ENCODE measurements at regions of chr22 and their contacts with region 1.

Region 1: GRCh38 chr22:37608477-37609239 is at the start of gene GGA1:
- DNase-seq: peak; percentile 90 to 100 (median 94)
- ATAC-seq: peak; percentile 77
- H3K4me3 ChIP-seq: peak within 1 kb of the TSS; percentile 92
- H3K4me3 Mint-ChIP-seq: peak within 1 kb of the TSS; percentile 94
- H3K27ac ChIP-seq: peak within 1 kb of the TSS; percentile 88 to 98
- H3K27ac Mint-ChIP-seq: peak within 1 kb of the TSS; percentile 92
- H3K4me1 ChIP-seq: peaks cover 75% of the 10 kb centered on the region
- H3K4me1 Mint-ChIP-seq: peaks cover 55% of the 10 kb centered on the region
- H3K27me3 ChIP-seq: no peaks in the 10 kb centered on the region
- H3K27me3 Mint-ChIP-seq: no peaks in the 10 kb centered on the region
- CTCF ChIP-seq: no peak
- total RNA-seq, gene GGA1: 57.0 to 60.9 TPM

Region 2: DNA sequence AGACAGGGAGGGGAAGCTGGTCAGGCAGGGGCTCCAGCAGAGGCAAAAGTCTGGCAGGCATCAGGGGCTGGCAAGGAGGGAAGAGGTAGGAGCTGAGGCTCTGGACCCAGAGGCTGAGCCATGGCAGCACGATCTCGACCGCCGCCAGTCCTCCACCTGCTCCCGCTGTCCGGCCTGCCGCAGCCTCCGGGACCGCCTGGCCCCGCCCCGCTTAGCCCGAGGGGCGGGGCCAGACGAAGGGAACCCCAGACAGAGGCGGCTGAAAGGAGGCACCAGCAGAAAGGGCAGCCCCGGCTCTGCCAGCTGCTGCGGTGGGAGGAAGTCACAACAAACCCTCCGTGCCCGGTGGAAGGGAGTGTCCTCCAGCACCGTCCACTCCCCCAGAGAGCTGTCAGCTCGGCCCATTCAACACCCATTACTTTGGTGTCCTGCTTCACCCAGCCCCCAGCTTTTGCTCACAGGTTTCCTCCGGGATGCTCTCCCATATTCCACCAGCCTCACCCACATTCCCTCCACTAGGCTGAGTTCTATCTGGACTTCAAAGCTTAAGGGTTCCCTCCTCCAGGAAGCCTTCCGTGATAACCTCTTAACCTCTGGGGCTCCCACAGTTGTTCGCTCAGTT is 122.3 kb before region 1 on chr22 and contains the start of gene MFNG:
- CTCF ChIA-PET with region 1: interaction called, 4 read pairs
- POLR2A ChIA-PET with region 1: interaction called, 78 read pairs
- intact Hi-C with region 1: loop called (anchors 1 kb)
- DNase-seq: peak; percentile 46 to 90 (median 72)
- ATAC-seq: peak; percentile 48
- H3K4me3 ChIP-seq: peak within 1 kb of the TSS; percentile 94
- H3K4me3 Mint-ChIP-seq: peak within 1 kb of the TSS; percentile 93
- H3K27ac ChIP-seq: peak within 1 kb of the TSS; percentile 87 to 88
- H3K27ac Mint-ChIP-seq: peak within 1 kb of the TSS; percentile 98
- H3K4me1 ChIP-seq: peaks cover 85% of the 10 kb centered on the region
- H3K4me1 Mint-ChIP-seq: peaks cover 77% of the 10 kb centered on the region
- H3K27me3 ChIP-seq: no peaks in the 10 kb centered on the region
- H3K27me3 Mint-ChIP-seq: no peaks in the 10 kb centered on the region
- CTCF ChIP-seq: no peak
- total RNA-seq, gene MFNG: 85.1 to 89.9 TPM

Region 3: GRCh38 chr22:37498289-37498909 is 110.3 kb before region 1 on chr22:
- CTCF ChIA-PET with region 1: no interaction called
- POLR2A ChIA-PET with region 1: no interaction called
- intact Hi-C with region 1: no loop called
- DNase-seq: peak; percentile 56 to 88 (median 72)
- ATAC-seq: peak; percentile 99
- H3K4me3 ChIP-seq: no peak overlapping the region
- H3K4me3 Mint-ChIP-seq: no peak overlapping the region
- H3K27ac ChIP-seq: no peak overlapping the region
- H3K27ac Mint-ChIP-seq: no peak overlapping the region
- H3K4me1 ChIP-seq: peaks cover 30% of the 10 kb centered on the region
- H3K4me1 Mint-ChIP-seq: peaks cover 28% of the 10 kb centered on the region
- H3K27me3 ChIP-seq: no peaks in the 10 kb centered on the region
- H3K27me3 Mint-ChIP-seq: no peaks in the 10 kb centered on the region
- CTCF ChIP-seq: peak; percentile 76

Region 4: GRCh38 chr22:37557321-37558001 is 51.2 kb before region 1 on chr22:
- CTCF ChIA-PET with region 1: no interaction called
- POLR2A ChIA-PET with region 1: no interaction called
- intact Hi-C with region 1: no loop called
- DNase-seq: no peak
- ATAC-seq: no peak
- H3K4me3 ChIP-seq: no peak overlapping the region
- H3K4me3 Mint-ChIP-seq: no peak overlapping the region
- H3K27ac ChIP-seq: no peak overlapping the region
- H3K27ac Mint-ChIP-seq: no peak overlapping the region
- H3K4me1 ChIP-seq: peaks cover 21% of the 10 kb centered on the region
- H3K4me1 Mint-ChIP-seq: peaks cover 14% of the 10 kb centered on the region
- H3K27me3 ChIP-seq: peaks cover 23 to 31% of the 10 kb centered on the region in 2 experiments
- H3K27me3 Mint-ChIP-seq: peaks cover 62% of the 10 kb centered on the region
- CTCF ChIP-seq: no peak

Region 5: GRCh38 chr22:37591823-37592404 is 16.7 kb before region 1 on chr22:
- CTCF ChIA-PET with region 1: interaction called, 70 read pairs
- POLR2A ChIA-PET with region 1: interaction called, 59 read pairs
- intact Hi-C with region 1: no loop called
- DNase-seq: no peak
- ATAC-seq: no peak
- H3K4me3 ChIP-seq: peak overlapping the region; percentile 24
- H3K4me3 Mint-ChIP-seq: peak overlapping the region; percentile 73
- H3K27ac ChIP-seq: peak overlapping the region in 1 of 2 donors; percentile 31
- H3K27ac Mint-ChIP-seq: peak overlapping the region; percentile 60
- H3K4me1 ChIP-seq: peaks cover 17% of the 10 kb centered on the region
- H3K4me1 Mint-ChIP-seq: peaks cover 13% of the 10 kb centered on the region
- H3K27me3 ChIP-seq: no peaks in the 10 kb centered on the region
- H3K27me3 Mint-ChIP-seq: no peaks in the 10 kb centered on the region
- CTCF ChIP-seq: no peak

Region 6: GRCh38 chr22:37633625-37634416 is 25.2 kb after region 1 on chr22:
- CTCF ChIA-PET with region 1: interaction called, 13 read pairs
- POLR2A ChIA-PET with region 1: interaction called, 71 read pairs
- intact Hi-C with region 1: no loop called
- DNase-seq: peak in 11 of 14 experiments; percentile 44 to 81 (median 52)
- ATAC-seq: peak; percentile 61
- H3K4me3 ChIP-seq: peak overlapping the region; percentile 34
- H3K4me3 Mint-ChIP-seq: peak overlapping the region; percentile 88
- H3K27ac ChIP-seq: peak overlapping the region; percentile 65 to 86
- H3K27ac Mint-ChIP-seq: peak overlapping the region; percentile 94
- H3K4me1 ChIP-seq: peaks cover 85% of the 10 kb centered on the region
- H3K4me1 Mint-ChIP-seq: peaks cover 68% of the 10 kb centered on the region
- H3K27me3 ChIP-seq: no peaks in the 10 kb centered on the region
- H3K27me3 Mint-ChIP-seq: no peaks in the 10 kb centered on the region
- CTCF ChIP-seq: no peak

Region 7: DNA sequence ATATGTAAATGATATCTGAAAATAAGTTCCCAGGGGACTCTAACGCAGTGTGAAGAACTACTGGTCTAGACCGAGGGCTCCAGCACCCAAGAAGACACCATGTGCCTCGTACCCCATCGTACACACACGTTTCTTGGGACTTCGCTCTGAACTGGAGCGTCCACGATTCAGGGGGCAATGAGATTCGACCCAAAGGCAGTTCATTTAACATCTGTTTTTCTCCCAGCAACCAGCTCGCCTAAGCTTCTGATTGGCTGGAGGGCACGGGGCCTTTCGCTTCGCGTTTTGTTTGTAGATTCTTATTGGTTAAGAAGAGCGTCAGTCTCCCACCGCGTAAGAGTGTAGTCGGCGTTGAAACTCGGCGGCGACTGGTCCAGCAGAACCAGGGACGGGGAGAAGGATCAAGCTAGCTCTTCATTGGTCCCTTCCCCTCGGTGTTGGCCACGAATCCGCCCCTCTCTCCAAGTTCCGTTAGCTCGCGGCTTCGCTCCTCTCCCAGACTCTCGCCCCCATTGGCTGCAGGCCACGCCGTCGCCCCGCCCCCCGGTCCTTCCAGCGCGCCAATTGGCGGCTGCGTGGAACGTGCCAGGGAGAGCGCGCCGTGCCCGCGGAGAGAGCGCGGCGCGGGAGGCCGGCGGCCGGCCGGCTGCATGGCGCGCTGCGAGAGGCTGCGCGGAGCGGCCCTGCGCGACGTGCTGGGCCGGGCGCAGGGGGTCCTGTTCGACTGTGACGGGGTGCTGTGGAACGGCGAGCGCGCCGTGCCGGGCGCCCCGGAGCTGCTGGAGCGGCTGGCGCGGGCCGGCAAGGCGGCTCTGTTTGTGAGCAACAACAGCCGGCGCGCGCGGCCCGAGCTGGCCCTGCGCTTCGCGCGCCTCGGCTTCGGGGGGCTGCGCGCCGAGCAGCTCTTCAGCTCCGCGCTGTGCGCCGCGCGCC is 49.7 kb after region 1 on chr22 and contains the start of gene PDXP:
- CTCF ChIA-PET with region 1: interaction called, 15 read pairs
- POLR2A ChIA-PET with region 1: interaction called, 51 read pairs
- intact Hi-C with region 1: no loop called
- DNase-seq: peak; percentile 96 to 99 (median 99)
- ATAC-seq: peak; percentile 94
- H3K4me3 ChIP-seq: peak within 1 kb of the TSS; percentile 65
- H3K4me3 Mint-ChIP-seq: peak within 1 kb of the TSS; percentile 91
- H3K27ac ChIP-seq: peak within 1 kb of the TSS; percentile 48 to 78
- H3K27ac Mint-ChIP-seq: peak within 1 kb of the TSS; percentile 91
- H3K4me1 ChIP-seq: peaks cover 35% of the 10 kb centered on the region
- H3K4me1 Mint-ChIP-seq: peaks cover 44% of the 10 kb centered on the region
- H3K27me3 ChIP-seq: no peaks in the 10 kb centered on the region
- H3K27me3 Mint-ChIP-seq: no peaks in the 10 kb centered on the region
- CTCF ChIP-seq: no peak
- total RNA-seq, gene PDXP: 1.5 TPM

Region 8: DNA sequence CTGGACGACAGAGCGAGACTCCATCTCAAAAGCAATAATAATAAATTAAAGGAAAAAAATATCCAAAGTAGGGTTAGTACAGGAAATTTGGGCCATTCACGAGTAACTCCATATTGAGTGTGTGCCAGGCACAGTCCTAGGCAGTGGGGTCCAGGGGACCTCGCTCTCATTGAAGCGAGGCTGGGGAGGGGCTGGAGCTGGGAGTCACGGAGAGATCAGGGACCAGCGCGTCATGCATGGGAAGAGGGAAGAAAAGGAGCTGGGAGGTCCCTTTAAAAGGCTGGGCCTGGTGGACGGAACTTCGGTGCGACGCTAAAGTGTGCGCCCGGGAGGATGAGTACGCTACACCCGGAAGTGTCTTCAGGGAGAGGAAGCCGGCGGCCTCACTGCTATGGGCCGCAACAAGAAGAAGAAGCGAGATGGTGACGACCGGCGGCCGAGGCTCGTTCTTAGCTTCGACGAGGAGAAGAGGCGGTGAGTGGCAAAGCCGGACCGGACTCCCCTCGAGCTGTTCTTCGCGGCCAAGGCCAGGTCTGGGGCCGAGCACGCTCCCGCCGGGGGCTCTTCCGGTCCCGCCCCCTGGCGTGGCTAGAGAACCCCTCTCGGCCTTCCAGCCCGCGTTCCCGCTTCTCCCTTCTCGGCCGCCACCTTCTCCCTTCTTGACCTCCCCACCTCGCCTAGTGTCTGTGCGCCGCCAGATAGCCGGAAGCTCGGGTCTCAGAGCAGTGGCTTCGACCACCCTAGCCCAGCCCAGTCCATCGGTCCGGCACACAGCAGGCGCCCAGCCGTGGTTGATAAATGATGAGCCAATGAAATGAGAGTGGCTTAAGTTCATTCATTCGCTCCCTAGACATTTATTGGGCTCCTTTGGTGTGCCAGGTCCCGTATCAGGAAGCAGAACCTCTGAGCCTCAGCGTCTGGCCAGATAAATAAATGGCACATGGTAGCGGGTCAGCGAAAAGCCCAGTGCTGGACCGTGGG is 77.6 kb after region 1 on chr22 and contains the start of gene NOL12:
- CTCF ChIA-PET with region 1: interaction called, 13 read pairs
- POLR2A ChIA-PET with region 1: interaction called, 34 read pairs
- intact Hi-C with region 1: loop called in 1 of 2 experiments (anchors 2 kb)
- DNase-seq: peak; percentile 64 to 90 (median 72)
- ATAC-seq: peak; percentile 92
- H3K4me3 ChIP-seq: peak within 1 kb of the TSS; percentile 72
- H3K4me3 Mint-ChIP-seq: peak within 1 kb of the TSS; percentile 90
- H3K27ac ChIP-seq: peak within 1 kb of the TSS; percentile 75 to 80
- H3K27ac Mint-ChIP-seq: peak within 1 kb of the TSS; percentile 76
- H3K4me1 ChIP-seq: peaks cover 38% of the 10 kb centered on the region
- H3K4me1 Mint-ChIP-seq: peaks cover 27% of the 10 kb centered on the region
- H3K27me3 ChIP-seq: no peaks in the 10 kb centered on the region
- H3K27me3 Mint-ChIP-seq: no peaks in the 10 kb centered on the region
- CTCF ChIP-seq: no peak
- total RNA-seq, gene NOL12: 24.3 to 26.2 TPM

Region 9: DNA sequence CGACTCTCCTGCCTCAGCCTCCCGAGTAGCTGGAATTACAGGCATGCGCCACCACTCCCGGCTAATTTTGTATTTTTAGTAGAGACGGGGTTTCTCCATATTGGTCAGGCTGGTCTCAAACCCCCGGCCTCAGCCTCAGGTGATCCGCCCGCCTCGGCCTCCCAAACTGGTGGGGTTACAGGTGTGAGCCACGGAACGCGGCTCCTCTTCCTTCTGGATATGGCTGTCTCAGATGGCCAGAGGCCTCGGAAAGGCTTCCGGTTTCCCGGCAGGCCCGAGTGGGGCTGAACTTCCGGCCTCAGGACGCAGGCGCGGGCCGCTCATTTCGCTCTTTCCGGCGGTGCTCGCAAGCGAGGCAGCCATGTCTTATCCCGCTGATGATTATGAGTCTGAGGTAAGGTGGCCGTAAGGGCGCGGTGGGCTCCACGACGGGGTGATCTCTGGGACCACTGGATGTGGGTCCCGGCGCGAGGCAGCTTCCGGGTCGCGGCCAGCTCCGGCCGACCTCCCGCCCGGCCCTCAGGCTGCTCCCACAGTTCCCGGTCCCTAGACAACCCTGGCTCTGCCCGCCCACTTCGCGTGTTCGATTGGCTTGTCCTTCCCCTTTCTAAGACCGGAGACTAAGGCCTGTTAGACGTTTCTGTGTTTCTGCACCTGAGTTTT is 240.6 kb after region 1 on chr22 and contains the start of gene EIF3L:
- CTCF ChIA-PET with region 1: interaction called, 5 read pairs
- POLR2A ChIA-PET with region 1: interaction called, 6 read pairs
- intact Hi-C with region 1: loop called in 1 of 2 experiments (anchors 2 kb)
- DNase-seq: peak; percentile 77 to 92 (median 84)
- ATAC-seq: peak; percentile 63
- H3K4me3 ChIP-seq: peak within 1 kb of the TSS; percentile 83
- H3K4me3 Mint-ChIP-seq: peak within 1 kb of the TSS; percentile 90
- H3K27ac ChIP-seq: peak within 1 kb of the TSS; percentile 78 to 89
- H3K27ac Mint-ChIP-seq: peak within 1 kb of the TSS; percentile 97
- H3K4me1 ChIP-seq: peaks cover 31% of the 10 kb centered on the region
- H3K4me1 Mint-ChIP-seq: peaks cover 51% of the 10 kb centered on the region
- H3K27me3 ChIP-seq: no peaks in the 10 kb centered on the region
- H3K27me3 Mint-ChIP-seq: no peaks in the 10 kb centered on the region
- CTCF ChIP-seq: no peak
- total RNA-seq, gene EIF3L: 525 to 541 TPM